AG04450 (cell line): ENCODE measurements at regions of chr1 and their contacts with region 1.

Region 1: DNA sequence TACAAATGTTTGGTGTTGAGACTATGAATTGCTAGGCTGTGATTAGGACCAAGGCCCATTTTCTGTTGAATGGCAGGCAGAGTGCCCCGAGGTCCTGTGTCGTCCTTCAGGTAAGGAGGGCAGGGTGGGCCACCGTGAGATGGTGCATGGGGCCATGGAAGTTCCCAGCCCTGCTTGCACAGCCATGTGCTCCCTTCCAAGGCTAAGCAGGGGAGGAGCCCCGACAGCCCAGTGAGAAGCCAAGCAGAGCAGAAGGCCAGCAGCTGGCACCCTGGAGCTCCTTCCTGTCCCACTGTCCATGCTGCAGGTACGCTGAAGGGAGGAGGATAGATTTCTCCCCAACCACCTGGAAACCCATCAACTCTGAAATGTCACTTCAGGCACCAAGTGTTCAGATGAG is 8.2 kb upstream of the NUAK2 start:
- DNase-seq: no peak
- H3K4me3 ChIP-seq: no peak overlapping the region
- H3K27ac ChIP-seq: no peak overlapping the region
- H3K27me3 ChIP-seq: peaks cover 19% of the 10 kb centered on the region
- CTCF ChIP-seq: no peak

Region 2: DNA sequence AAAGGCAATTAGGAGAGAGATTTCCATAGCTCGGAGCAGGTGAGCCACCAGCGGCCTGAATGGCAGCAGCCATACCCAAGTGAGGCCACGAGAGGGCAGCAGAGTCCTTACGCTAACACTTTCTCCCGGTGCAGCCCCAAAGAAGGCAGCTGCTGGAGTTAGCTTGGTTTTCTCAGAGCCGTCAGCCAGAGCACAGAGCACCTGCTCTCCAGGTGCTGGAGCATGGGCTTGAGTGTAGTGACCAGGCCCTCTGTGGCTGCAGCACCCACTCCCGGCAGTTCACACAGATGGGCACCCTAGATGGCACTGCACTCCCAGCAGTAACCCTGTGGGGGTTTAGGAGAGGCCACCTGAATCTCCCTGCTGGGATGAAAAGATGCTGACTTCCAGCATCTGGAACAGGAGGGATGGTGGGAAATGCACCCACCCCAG is 56.2 kb before region 1 on chr1:
- CTCF ChIA-PET with region 1: interaction called, 603 read pairs
- POLR2A ChIA-PET with region 1: interaction called, 16 read pairs
- DNase-seq: no peak
- H3K4me3 ChIP-seq: no peak overlapping the region
- H3K27ac ChIP-seq: no peak overlapping the region
- H3K27me3 ChIP-seq: no peaks in the 10 kb centered on the region
- CTCF ChIP-seq: peak; percentile 97

Region 3: DNA sequence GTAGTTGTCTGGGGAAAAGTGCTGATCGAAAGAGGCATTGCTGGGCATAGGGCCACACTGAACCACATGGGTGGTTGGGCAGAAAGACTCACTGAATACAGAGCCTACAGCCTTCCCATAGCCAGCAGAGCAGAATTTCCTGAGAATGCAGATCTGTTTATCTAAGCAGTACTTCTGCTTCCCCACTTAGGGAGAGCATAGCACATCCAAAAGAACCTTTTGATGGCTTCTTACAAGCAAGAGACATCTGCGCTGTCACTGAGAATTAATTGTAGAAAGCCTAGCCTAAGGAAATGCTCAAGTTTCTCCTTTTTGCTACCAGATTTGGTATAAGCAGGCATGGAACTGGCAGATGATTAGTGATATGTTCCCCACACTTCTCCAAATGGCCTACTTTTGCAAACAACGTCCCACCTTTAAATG is 40.0 kb after region 1 on chr1:
- CTCF ChIA-PET with region 1: no interaction called
- POLR2A ChIA-PET with region 1: no interaction called
- DNase-seq: no peak
- H3K4me3 ChIP-seq: no peak overlapping the region
- H3K27ac ChIP-seq: no peak overlapping the region
- H3K27me3 ChIP-seq: no peaks in the 10 kb centered on the region
- CTCF ChIP-seq: no peak